ENCODE measurements at regions of chr4 and their contacts with region 1.

Region 1: GRCh38 chr4:57639561-57640382 is 529.6 kb upstream of the IGFBP7 start:
- DNase-seq: no peak
- ATAC-seq: no peak
- H3K4me3 ChIP-seq: no peak overlapping the region
- H3K27ac ChIP-seq: no peak overlapping the region
- H3K4me1 ChIP-seq: no peaks in the 10 kb centered on the region
- H3K27me3 ChIP-seq: peaks cover 18% of the 10 kb centered on the region; the same call in 1 of the 2 replicates
- CTCF ChIP-seq: no peak

Region 2: DNA sequence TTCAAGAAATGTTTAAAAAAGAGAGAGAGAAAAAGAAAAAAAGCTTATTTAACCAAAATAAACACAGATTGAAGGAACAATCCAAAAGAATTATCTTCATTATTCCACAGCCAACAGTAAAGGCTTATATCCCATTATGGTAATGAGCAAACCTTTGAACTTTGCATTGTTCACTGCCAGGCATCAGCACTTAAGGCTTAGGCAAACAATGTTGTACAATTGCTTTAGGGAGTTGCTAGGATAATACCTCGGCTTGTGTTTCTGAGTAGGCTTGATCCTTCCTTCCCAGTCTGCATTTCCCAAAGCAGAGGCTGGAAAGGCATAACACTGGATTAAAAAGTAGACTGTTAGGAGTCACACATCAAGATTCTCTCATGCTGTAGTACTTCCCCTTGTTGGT is 176.9 kb before region 1 on chr4:
- CTCF ChIA-PET with region 1: interaction called, 13 read pairs
- POLR2A ChIA-PET with region 1: no interaction called
- intact Hi-C with region 1: no loop called
- DNase-seq: no peak
- ATAC-seq: no peak
- H3K4me3 ChIP-seq: no peak overlapping the region
- H3K27ac ChIP-seq: no peak overlapping the region
- H3K4me1 ChIP-seq: no peaks in the 10 kb centered on the region
- H3K27me3 ChIP-seq: peaks cover 15% of the 10 kb centered on the region
- CTCF ChIP-seq: no peak

Region 3: GRCh38 chr4:57777866-57778265 is 138.1 kb after region 1 on chr4:
- CTCF ChIA-PET with region 1: no interaction called
- POLR2A ChIA-PET with region 1: no interaction called
- intact Hi-C with region 1: no loop called
- DNase-seq: no peak
- ATAC-seq: no peak
- H3K4me3 ChIP-seq: no peak overlapping the region
- H3K27ac ChIP-seq: no peak overlapping the region
- H3K4me1 ChIP-seq: no peaks in the 10 kb centered on the region
- H3K27me3 ChIP-seq: no peaks in the 10 kb centered on the region
- CTCF ChIP-seq: no peak